ENCODE measurements at regions of chr17 and their contacts with region 1.

Region 1: GRCh38 chr17:39235555-39236449 is 10.1 kb upstream of the STAC2 start:
- DNase-seq: peak; percentile 76
- H3K4me3 Mint-ChIP-seq: no peak overlapping the region
- H3K27ac Mint-ChIP-seq: no peak overlapping the region
- H3K4me1 Mint-ChIP-seq: peaks cover 34% of the 10 kb centered on the region
- H3K27me3 Mint-ChIP-seq: peaks cover 2% of the 10 kb centered on the region

Region 2: GRCh38 chr17:39209317-39210092 is 26.3 kb before region 1 on chr17:
- CTCF ChIA-PET with region 1: interaction called, 502 read pairs
- intact Hi-C with region 1: loop called (anchors 1 kb)
- DNase-seq: peak; percentile 79
- H3K4me3 Mint-ChIP-seq: peak overlapping the region; percentile 24
- H3K27ac Mint-ChIP-seq: no peak overlapping the region
- H3K4me1 Mint-ChIP-seq: peaks cover 31% of the 10 kb centered on the region
- H3K27me3 Mint-ChIP-seq: no peaks in the 10 kb centered on the region

Region 3: GRCh38 chr17:39219647-39220154 is 16.1 kb before region 1 on chr17:
- CTCF ChIA-PET with region 1: interaction called, 11 read pairs
- intact Hi-C with region 1: no loop called
- DNase-seq: no peak
- H3K4me3 Mint-ChIP-seq: no peak overlapping the region
- H3K27ac Mint-ChIP-seq: no peak overlapping the region
- H3K4me1 Mint-ChIP-seq: peaks cover 2% of the 10 kb centered on the region
- H3K27me3 Mint-ChIP-seq: peaks cover 25% of the 10 kb centered on the region

Region 4: GRCh38 chr17:39485555-39485954 is 249.8 kb after region 1 on chr17:
- CTCF ChIA-PET with region 1: no interaction called
- intact Hi-C with region 1: no loop called
- DNase-seq: no peak
- H3K4me3 Mint-ChIP-seq: no peak overlapping the region
- H3K27ac Mint-ChIP-seq: no peak overlapping the region
- H3K4me1 Mint-ChIP-seq: peaks cover 7% of the 10 kb centered on the region
- H3K27me3 Mint-ChIP-seq: no peaks in the 10 kb centered on the region

Measured in activated naive CD4-positive, alpha-beta T cell treated with anti-CD3 and anti-CD28 coated beads for 36 hours (primary cell).